Tibial artery (tissue), 4 donors: ENCODE measurements at regions of chr2 and their contacts with region 1.

Region 1: DNA sequence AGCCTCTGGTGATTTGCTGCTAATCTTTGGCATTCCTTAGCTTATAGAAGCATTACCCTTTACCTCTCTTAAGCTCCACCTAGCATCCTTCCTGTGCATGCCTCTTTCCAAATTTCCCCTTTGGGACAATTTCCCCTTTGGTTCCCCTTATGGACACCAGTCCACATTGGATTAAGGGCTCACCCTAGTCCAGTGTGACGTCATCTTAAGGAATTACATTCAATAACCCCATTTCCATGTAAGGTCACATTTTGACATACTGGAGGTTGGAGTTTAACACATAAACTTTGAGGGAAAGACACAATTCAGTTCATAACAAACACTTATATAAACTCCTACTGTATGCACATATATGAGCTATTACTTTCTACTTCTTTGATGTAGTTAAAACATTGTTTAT is 916.6 kb downstream of the SLC4A3 start:
- DNase-seq: no peak
- H3K4me3 ChIP-seq: no peak overlapping the region
- H3K27ac ChIP-seq: no peak overlapping the region
- H3K4me1 ChIP-seq: no peaks in the 10 kb centered on the region
- H3K27me3 ChIP-seq: no peaks in the 10 kb centered on the region
- CTCF ChIP-seq: no peak

Region 2: DNA sequence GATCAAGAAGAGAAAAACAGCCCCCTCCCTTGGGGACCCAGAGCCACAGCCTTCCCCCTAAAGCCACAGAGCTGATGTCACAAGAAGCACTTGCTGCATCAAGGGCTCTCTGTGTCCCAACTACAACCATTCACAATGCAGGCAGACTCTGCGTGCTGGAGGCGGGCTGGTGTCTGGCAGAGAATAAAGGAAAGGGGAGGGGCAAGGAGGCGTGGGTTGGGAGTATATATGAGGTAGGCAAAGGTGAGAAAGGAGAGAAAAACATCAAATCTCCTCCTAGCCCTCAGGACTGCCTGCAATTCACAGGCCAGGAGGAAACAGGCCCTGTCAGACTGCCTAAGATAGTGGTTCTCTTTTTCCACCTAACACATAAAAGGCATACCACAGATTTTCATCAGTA is 1434.6 kb before region 1 on chr2:
- intact Hi-C with region 1: no loop called
- DNase-seq: no peak
- H3K4me3 ChIP-seq: no peak overlapping the region
- H3K27ac ChIP-seq: no peak overlapping the region
- H3K4me1 ChIP-seq: peaks cover 0 to 4% (median 2%) of the 10 kb centered on the region in 4 donors
- H3K27me3 ChIP-seq: no peaks in the 10 kb centered on the region
- CTCF ChIP-seq: no peak

Region 3: DNA sequence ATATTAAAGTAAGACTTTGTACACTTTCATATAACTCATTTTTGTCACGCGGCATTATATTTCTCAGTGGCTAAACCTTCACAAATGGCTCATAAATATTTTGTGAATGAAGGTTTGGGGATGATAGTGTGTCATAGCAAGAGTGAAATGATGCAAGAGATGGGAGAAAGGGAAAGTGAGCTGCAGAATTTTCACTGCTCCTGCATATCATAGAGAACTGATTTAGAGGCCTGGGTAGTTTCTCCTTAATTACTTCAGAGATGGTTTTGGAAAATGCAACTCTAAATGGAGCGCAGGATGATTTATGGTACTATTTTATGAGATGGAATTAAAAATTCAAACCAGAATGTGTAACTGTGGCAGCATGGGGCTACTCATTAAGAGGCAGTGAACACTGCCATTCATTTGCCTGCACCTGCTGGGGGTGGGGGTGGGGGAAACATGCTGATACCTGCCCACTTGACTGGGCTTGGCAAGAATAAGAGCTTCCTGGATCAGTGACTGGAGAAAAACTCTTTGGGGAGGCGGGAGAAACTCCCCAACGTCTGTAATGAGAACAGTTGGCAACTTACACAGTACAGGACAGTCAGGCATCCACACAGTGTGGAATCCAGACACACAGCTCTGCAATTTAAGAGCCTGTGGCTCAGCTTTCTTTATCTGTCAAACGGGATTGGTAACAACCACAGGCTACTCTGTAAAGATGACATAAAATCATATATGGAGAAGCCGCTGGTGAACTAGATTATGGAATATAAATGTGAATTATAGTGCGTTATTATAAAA is 25.2 kb after region 1 on chr2:
- intact Hi-C with region 1: loop called (anchors 2 kb)
- DNase-seq: no peak
- H3K4me3 ChIP-seq: no peak overlapping the region
- H3K27ac ChIP-seq: no peak overlapping the region
- H3K4me1 ChIP-seq: no peaks in the 10 kb centered on the region
- H3K27me3 ChIP-seq: no peaks in the 10 kb centered on the region
- CTCF ChIP-seq: no peak

Region 4: DNA sequence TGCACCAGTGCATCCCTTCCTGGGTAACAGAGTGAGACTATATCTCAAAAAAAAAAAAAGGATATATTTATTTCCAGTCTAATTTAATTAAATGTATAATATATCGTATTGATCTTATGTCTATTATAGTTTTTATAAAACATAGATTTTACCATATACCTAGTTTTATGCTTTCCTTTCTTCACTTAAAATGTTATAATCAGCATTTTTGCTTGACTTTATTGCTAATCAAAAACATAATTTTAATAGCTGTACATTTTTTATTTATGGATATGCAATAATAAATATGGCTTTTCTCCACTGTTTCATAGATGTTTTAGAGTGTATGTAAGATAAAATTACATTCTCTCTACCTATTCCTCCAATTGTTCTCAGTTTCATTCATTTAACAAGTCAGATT is 70.0 kb after region 1 on chr2:
- intact Hi-C with region 1: no loop called
- DNase-seq: no peak
- H3K4me3 ChIP-seq: no peak overlapping the region
- H3K27ac ChIP-seq: no peak overlapping the region
- H3K4me1 ChIP-seq: no peaks in the 10 kb centered on the region
- H3K27me3 ChIP-seq: no peaks in the 10 kb centered on the region
- CTCF ChIP-seq: no peak